ENCODE measurements at regions of chr2 and their contacts with region 1.

Region 1: GRCh38 chr2:173997269-173997668 is 32.1 kb upstream of the SP3 start:
- DNase-seq: peak; percentile 98 to 100 (median 99)
- H3K4me3 ChIP-seq: no peak overlapping the region
- H3K4me3 Mint-ChIP-seq: no peak overlapping the region
- H3K27ac ChIP-seq: peak overlapping the region; percentile 94 to 95
- H3K27ac Mint-ChIP-seq: peak overlapping the region; percentile 92 to 98 (median 97)
- H3K4me1 ChIP-seq: peaks cover 42% of the 10 kb centered on the region in 2 donors
- H3K4me1 Mint-ChIP-seq: peaks cover 46% of the 10 kb centered on the region
- H3K27me3 ChIP-seq: no peaks in the 10 kb centered on the region
- H3K27me3 Mint-ChIP-seq: peaks cover 0 to 1% (median 0%) of the 10 kb centered on the region in 3 donors
- CTCF ChIP-seq: no peak

Region 2: GRCh38 chr2:174034093-174034492 is 36.8 kb after region 1 on chr2:
- intact Hi-C with region 1: loop called in 1 of 2 experiments (anchors 5 kb)
- DNase-seq: no peak
- H3K4me3 ChIP-seq: no peak overlapping the region
- H3K4me3 Mint-ChIP-seq: no peak overlapping the region
- H3K27ac ChIP-seq: peak overlapping the region in 1 of 2 donors; percentile 93
- H3K27ac Mint-ChIP-seq: peak overlapping the region in 6 of 7 donors; percentile 54 to 99 (median 84)
- H3K4me1 ChIP-seq: peaks cover 90 to 93% of the 10 kb centered on the region in 2 donors
- H3K4me1 Mint-ChIP-seq: peaks cover 95% of the 10 kb centered on the region
- H3K27me3 ChIP-seq: no peaks in the 10 kb centered on the region
- H3K27me3 Mint-ChIP-seq: peaks cover 0 to 6% (median 2%) of the 10 kb centered on the region in 3 donors
- CTCF ChIP-seq: no peak

Region 3: GRCh38 chr2:174039551-174040416 is 42.5 kb after region 1 on chr2:
- intact Hi-C with region 1: loop called (anchors 5 kb)
- DNase-seq: peak; percentile 95 to 99 (median 97)
- H3K4me3 ChIP-seq: no peak overlapping the region
- H3K4me3 Mint-ChIP-seq: peak overlapping the region; percentile 31 to 67
- H3K27ac ChIP-seq: peak overlapping the region; percentile 93 to 99
- H3K27ac Mint-ChIP-seq: peak overlapping the region; percentile 97 to 100 (median 99)
- H3K4me1 ChIP-seq: peaks cover 65 to 69% of the 10 kb centered on the region in 2 donors
- H3K4me1 Mint-ChIP-seq: peaks cover 70% of the 10 kb centered on the region
- H3K27me3 ChIP-seq: no peaks in the 10 kb centered on the region
- H3K27me3 Mint-ChIP-seq: peaks cover 0 to 4% (median 0%) of the 10 kb centered on the region in 3 donors
- CTCF ChIP-seq: peak; percentile 87